Breast epithelium (tissue), 4 donors: ENCODE measurements at regions of chr10 and their contacts with region 1.

Region 1: GRCh38 chr10:120702032-120702431 is 149.1 kb upstream of the WDR11 start:
- DNase-seq: no peak
- H3K4me3 ChIP-seq: no peak overlapping the region
- H3K27ac ChIP-seq: no peak overlapping the region
- H3K4me1 ChIP-seq: no peaks in the 10 kb centered on the region
- H3K27me3 ChIP-seq: no peaks in the 10 kb centered on the region
- CTCF ChIP-seq: no peak
- POLR2A ChIP-seq: no peak

Region 2: DNA sequence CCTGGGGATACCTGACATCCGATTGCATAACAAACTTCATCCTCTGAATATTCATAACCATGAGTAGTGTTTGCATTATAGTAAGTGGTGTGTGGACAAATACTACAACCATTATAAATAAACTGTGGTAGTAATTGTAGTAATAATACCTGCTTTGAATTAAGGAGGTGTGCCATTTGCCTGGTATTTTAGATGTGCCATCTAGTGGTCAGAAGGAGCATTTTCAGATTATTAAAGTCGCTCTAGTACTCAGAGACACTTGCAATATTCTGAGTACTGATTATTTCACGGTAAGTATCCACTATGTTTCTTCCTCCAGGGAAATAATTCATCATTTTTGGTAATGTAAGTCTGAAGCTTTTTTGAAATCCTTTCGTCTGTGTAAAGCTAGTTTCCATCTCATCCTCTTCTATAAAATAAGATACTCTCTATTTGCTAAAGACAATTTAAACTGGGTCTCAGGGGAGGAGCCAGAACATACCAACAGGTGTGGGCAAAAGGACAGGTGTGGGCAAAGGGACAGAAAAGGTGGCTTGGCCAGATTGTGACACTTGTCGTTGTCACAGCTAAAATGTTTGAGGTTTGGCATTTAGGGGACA is 33.8 kb after region 1 on chr10:
- intact Hi-C with region 1: loop called (anchors 2 kb)
- DNase-seq: no peak
- H3K4me3 ChIP-seq: no peak overlapping the region
- H3K27ac ChIP-seq: no peak overlapping the region
- H3K4me1 ChIP-seq: no peaks in the 10 kb centered on the region
- H3K27me3 ChIP-seq: peaks cover 0 to 5% of the 10 kb centered on the region in 2 donors
- CTCF ChIP-seq: peak in 2 of 3 donors; percentile 48 to 54
- POLR2A ChIP-seq: no peak

Region 3: GRCh38 chr10:121113387-121113701 is 411.3 kb after region 1 on chr10:
- intact Hi-C with region 1: no loop called
- DNase-seq: no peak
- H3K4me3 ChIP-seq: no peak overlapping the region
- H3K27ac ChIP-seq: no peak overlapping the region
- H3K4me1 ChIP-seq: no peaks in the 10 kb centered on the region
- H3K27me3 ChIP-seq: no peaks in the 10 kb centered on the region
- CTCF ChIP-seq: no peak
- POLR2A ChIP-seq: no peak